ENCODE measurements at regions of chr6 and their contacts with region 1.

Region 1: GRCh38 chr6:28586962-28587745 is 61.5 kb downstream of the GPX5 start:
- DNase-seq: peak; percentile 84
- H3K4me3 Mint-ChIP-seq: peak overlapping the region; percentile 91
- H3K27ac Mint-ChIP-seq: peak overlapping the region; percentile 89
- H3K4me1 Mint-ChIP-seq: peaks cover 39% of the 10 kb centered on the region
- H3K27me3 Mint-ChIP-seq: no peaks in the 10 kb centered on the region
- CTCF ChIP-seq: no peak

Region 2: DNA sequence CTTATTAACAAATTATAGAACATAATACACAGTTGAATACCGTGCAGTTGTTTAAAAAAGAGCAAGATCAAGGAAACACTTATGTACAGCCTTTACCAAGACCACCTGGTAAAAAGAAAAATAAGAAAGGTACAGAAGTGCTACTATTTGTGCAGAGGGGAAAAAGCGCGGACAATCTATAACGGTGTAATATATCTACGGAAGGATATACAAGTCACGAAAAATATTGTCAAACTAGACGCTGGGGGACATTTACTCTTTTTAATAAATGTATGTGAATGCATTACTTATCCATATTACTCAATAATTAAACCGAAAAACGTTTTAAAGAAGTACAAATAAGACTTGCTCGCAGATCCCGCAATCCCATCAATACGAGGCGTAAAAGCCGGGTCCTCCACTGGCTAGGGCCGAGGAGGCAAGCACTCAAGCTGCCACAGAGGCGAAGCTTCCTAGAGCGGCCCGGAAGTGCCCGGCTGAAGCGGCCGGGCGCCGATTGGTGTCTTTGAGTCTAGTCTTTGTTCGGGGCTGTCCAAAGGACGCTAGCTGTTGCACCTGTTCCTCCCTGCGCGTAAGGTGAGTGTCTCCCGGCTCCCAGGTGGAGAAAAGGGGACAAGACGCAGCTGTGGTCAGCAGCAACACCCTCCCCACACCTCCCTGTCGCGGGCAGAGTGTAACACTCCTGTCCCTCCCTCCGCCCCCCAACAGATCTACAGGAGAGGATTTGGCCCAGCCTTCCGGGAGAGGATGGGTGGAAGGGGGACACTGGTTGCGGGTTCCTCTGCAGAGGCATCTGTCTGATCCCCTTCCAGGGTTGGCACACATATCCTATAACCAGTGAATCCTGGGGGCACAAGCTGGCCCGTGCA is 462.8 kb before region 1 on chr6 and contains the start of gene ZSCAN16:
- CTCF ChIA-PET with region 1: no interaction called
- intact Hi-C with region 1: loop called (anchors 10 kb)
- DNase-seq: peak; percentile 91
- H3K4me3 Mint-ChIP-seq: peak within 1 kb of the TSS; percentile 85
- H3K27ac Mint-ChIP-seq: peak within 1 kb of the TSS; percentile 48
- H3K4me1 Mint-ChIP-seq: peaks cover 22% of the 10 kb centered on the region
- H3K27me3 Mint-ChIP-seq: no peaks in the 10 kb centered on the region
- CTCF ChIP-seq: no peak
- total RNA-seq, gene ZSCAN16: 14.2 and 15.9 TPM in 2 replicates

Region 3: DNA sequence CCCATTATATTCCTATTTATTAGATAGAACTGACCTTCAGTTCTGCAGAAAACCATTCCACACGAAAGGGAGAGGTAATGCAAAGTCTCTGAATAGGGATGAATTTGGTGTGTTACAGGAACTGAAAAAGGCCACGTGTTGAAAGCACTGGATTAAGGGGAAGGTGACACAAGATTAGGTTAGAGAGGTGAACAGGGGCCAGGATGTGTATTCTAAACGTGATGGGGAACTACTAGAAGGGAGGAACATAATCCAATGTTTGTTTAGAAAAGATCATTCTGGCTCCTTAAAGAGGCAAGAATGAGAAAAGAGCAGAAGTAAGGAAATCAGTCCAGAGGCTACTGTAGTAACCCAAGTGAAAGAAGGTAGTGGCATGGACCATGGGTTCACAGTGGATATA is 451.8 kb before region 1 on chr6:
- CTCF ChIA-PET with region 1: no interaction called
- intact Hi-C with region 1: no loop called
- DNase-seq: no peak
- H3K4me3 Mint-ChIP-seq: peak overlapping the region; percentile 97
- H3K27ac Mint-ChIP-seq: peak overlapping the region; percentile 93
- H3K4me1 Mint-ChIP-seq: peaks cover 28% of the 10 kb centered on the region
- H3K27me3 Mint-ChIP-seq: no peaks in the 10 kb centered on the region
- CTCF ChIP-seq: no peak

Region 4: GRCh38 chr6:28383235-28384142 is 203.7 kb before region 1 on chr6:
- CTCF ChIA-PET with region 1: no interaction called
- intact Hi-C with region 1: loop called (anchors 5 kb)
- DNase-seq: peak; percentile 90
- H3K4me3 Mint-ChIP-seq: peak overlapping the region; percentile 85
- H3K27ac Mint-ChIP-seq: peak overlapping the region; percentile 88
- H3K4me1 Mint-ChIP-seq: peaks cover 13% of the 10 kb centered on the region
- H3K27me3 Mint-ChIP-seq: no peaks in the 10 kb centered on the region
- CTCF ChIP-seq: peak; percentile 77

Region 5: DNA sequence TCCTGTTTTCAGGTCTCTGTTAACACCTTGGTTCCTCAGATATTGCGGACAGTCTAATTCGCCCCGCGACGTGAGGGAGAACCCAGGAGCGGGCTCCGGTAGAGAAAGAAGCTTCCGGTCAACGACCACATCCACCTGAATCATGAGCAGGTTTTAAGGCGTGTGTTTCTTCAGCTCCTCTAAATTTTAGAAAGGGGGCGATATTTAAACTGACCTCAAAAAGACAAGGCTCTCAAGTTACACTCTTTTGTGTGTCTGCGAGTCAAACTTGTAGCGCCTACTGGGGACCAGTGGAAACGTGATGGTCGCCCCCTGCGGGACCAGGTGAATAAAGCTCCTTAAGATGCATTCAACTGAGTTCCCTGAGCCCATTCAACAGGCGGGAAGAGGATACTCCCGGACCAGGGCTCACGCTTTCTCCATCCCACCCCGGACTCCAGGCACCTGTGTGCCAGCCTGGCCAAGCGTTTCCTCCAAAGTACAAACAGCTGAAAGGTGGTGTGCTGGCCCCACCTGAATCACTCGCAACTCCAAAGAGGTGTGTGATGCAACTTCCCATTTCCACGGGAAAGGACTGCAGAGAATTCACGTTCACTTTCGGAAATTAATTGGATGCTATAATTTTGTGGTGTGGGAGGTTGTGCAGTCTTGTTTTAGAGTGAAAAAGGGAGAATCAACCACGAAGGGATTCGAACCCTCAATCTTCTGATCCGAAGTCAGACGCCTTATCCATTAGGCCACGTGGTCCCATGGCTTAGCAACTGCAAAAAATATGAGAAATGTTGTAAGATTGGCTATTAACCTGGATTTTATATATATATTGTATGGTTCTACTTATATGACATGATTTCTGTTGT is 44.5 kb before region 1 on chr6:
- CTCF ChIA-PET with region 1: interaction called, 4 read pairs
- intact Hi-C with region 1: loop called (anchors 5 kb)
- DNase-seq: peak; percentile 77
- H3K4me3 Mint-ChIP-seq: peak overlapping the region; percentile 64
- H3K27ac Mint-ChIP-seq: peak overlapping the region; percentile 96
- H3K4me1 Mint-ChIP-seq: peaks cover 10% of the 10 kb centered on the region
- H3K27me3 Mint-ChIP-seq: no peaks in the 10 kb centered on the region
- CTCF ChIP-seq: peak; percentile 44

Region 6: GRCh38 chr6:28683944-28684538 is 96.9 kb after region 1 on chr6:
- CTCF ChIA-PET with region 1: no interaction called
- intact Hi-C with region 1: loop called (anchors 2 kb)
- DNase-seq: peak; percentile 48
- H3K4me3 Mint-ChIP-seq: peak overlapping the region; percentile 65
- H3K27ac Mint-ChIP-seq: no peak overlapping the region
- H3K4me1 Mint-ChIP-seq: peaks cover 35% of the 10 kb centered on the region
- H3K27me3 Mint-ChIP-seq: no peaks in the 10 kb centered on the region
- CTCF ChIP-seq: peak; percentile 85

Region 7: GRCh38 chr6:29414588-29414987 is 827.4 kb after region 1 on chr6 and contains the start of gene OR12D1:
- CTCF ChIA-PET with region 1: no interaction called
- intact Hi-C with region 1: no loop called
- DNase-seq: peak; percentile 36
- H3K4me3 Mint-ChIP-seq: no peak within 1 kb of the TSS
- H3K27ac Mint-ChIP-seq: no peak within 1 kb of the TSS
- H3K4me1 Mint-ChIP-seq: no peaks in the 10 kb centered on the region
- H3K27me3 Mint-ChIP-seq: no peaks in the 10 kb centered on the region
- CTCF ChIP-seq: peak; percentile 28
- total RNA-seq, gene OR12D1: not detected in 2 replicates